GM12878 (cell line): ENCODE measurements at regions of chr2 and their contacts with region 1.

Region 1: GRCh38 chr2:196171248-196171871 is at the start of gene STK17B:
- DNase-seq: peak; percentile 82
- ATAC-seq: peak; percentile 64
- H3K4me3 ChIP-seq: peak within 1 kb of the TSS; percentile 98
- H3K27ac ChIP-seq: peak within 1 kb of the TSS; percentile 87
- H3K4me1 ChIP-seq: peaks cover 15% of the 10 kb centered on the region
- H3K27me3 ChIP-seq: no peaks in the 10 kb centered on the region
- CTCF ChIP-seq: no peak
- EP300 ChIP-seq: 0 out of 4 replicates have a peak, but pooled peaks of 1 of the 2 experiments have one; percentile 34
- POLR2A ChIP-seq: peak; percentile 99
- RAD21 ChIP-seq: peak; percentile 16; the same call in 1 of the 2 replicates
- polyA plus RNA-seq, gene STK17B: 21.2 to 28.2 TPM

Region 2: DNA sequence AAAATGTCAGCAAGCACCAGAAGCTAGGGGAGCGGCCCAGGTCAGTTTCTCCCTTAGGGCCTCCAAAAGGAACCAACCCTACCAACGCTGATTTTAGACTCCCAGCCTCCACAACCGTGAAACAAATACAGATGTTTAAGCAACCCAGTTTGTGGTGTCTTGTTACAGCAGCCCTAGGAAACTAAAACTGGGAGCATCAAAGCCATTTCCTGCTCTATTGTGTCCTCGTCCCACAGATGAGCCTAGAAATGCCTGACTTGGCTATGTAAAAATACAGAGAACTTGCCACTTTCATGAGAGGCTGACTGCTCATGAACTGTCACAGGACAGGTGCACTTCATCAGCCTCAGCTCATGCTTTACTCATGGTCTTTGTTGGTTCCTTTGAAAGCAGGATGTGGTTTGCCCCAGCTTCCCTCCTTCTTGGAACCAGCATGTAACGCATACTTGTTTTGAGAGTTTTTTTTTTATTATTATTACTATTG is 611.9 kb before region 1 on chr2:
- CTCF ChIA-PET with region 1: no interaction called
- POLR2A ChIA-PET with region 1: interaction called, 7 read pairs
- RAD21 ChIA-PET with region 1: no interaction called
- SMC1A ChIA-PET with region 1: no interaction called
- in situ Hi-C with region 1: no loop called
- intact Hi-C with region 1: loop called (anchors 5 kb)
- DNase-seq: peak; percentile 99
- ATAC-seq: peak; percentile 72
- H3K4me3 ChIP-seq: 0 out of 2 replicates have a peak overlapping the region, but pooled peaks have one; percentile 6
- H3K27ac ChIP-seq: peak overlapping the region; percentile 94
- H3K4me1 ChIP-seq: peaks cover 39% of the 10 kb centered on the region
- H3K27me3 ChIP-seq: no peaks in the 10 kb centered on the region
- CTCF ChIP-seq: no peak
- EP300 ChIP-seq: peak; percentile 88 to 97
- POLR2A ChIP-seq: no peak
- RAD21 ChIP-seq: 0 out of 2 replicates have a peak, but pooled peaks have one; percentile 15

Region 3: GRCh38 chr2:196160101-196160500 is 11.3 kb before region 1 on chr2:
- CTCF ChIA-PET with region 1: interaction called, 10 read pairs
- POLR2A ChIA-PET with region 1: interaction called, 64 read pairs
- RAD21 ChIA-PET with region 1: interaction called, 93 read pairs
- SMC1A ChIA-PET with region 1: interaction called, 74 read pairs
- in situ Hi-C with region 1: no loop called
- intact Hi-C with region 1: loop called (anchors 1 kb)
- DNase-seq: peak; percentile 86
- ATAC-seq: peak; percentile 64
- H3K4me3 ChIP-seq: no peak overlapping the region; the same call in 1 of the 2 replicates
- H3K27ac ChIP-seq: peak overlapping the region; percentile 77
- H3K4me1 ChIP-seq: peaks cover 29% of the 10 kb centered on the region
- H3K27me3 ChIP-seq: no peaks in the 10 kb centered on the region
- CTCF ChIP-seq: no peak
- EP300 ChIP-seq: peak; percentile 93
- POLR2A ChIP-seq: no peak
- RAD21 ChIP-seq: peak; percentile 17; the same call in 1 of the 2 replicates

Region 4: DNA sequence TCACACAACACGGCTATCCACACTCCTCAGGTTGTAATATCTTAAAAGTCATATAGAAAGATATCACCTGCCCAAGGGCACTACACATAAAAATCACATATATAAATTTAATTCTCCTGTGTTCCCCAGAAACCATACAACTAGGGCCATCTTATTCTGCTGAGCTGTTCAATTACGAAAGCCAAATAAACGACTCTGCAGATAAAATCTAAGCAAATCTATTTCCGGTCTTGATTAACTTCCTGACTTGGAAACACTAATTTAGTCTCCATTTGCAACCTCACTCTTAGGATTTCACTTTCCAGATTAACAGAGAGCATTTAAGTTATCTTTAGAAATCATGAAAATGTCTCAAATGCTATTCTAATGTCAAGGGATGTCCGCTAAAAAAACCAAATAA is 23.9 kb after region 1 on chr2:
- CTCF ChIA-PET with region 1: no interaction called
- POLR2A ChIA-PET with region 1: interaction called, 5 read pairs
- RAD21 ChIA-PET with region 1: interaction called, 44 read pairs
- SMC1A ChIA-PET with region 1: interaction called, 58 read pairs
- in situ Hi-C with region 1: no loop called
- intact Hi-C with region 1: loop called (anchors 1 kb)
- DNase-seq: no peak
- ATAC-seq: no peak
- H3K4me3 ChIP-seq: no peak overlapping the region
- H3K27ac ChIP-seq: no peak overlapping the region
- H3K4me1 ChIP-seq: no peaks in the 10 kb centered on the region
- H3K27me3 ChIP-seq: no peaks in the 10 kb centered on the region
- CTCF ChIP-seq: no peak
- EP300 ChIP-seq: no peak
- POLR2A ChIP-seq: no peak
- RAD21 ChIP-seq: no peak

Region 5: DNA sequence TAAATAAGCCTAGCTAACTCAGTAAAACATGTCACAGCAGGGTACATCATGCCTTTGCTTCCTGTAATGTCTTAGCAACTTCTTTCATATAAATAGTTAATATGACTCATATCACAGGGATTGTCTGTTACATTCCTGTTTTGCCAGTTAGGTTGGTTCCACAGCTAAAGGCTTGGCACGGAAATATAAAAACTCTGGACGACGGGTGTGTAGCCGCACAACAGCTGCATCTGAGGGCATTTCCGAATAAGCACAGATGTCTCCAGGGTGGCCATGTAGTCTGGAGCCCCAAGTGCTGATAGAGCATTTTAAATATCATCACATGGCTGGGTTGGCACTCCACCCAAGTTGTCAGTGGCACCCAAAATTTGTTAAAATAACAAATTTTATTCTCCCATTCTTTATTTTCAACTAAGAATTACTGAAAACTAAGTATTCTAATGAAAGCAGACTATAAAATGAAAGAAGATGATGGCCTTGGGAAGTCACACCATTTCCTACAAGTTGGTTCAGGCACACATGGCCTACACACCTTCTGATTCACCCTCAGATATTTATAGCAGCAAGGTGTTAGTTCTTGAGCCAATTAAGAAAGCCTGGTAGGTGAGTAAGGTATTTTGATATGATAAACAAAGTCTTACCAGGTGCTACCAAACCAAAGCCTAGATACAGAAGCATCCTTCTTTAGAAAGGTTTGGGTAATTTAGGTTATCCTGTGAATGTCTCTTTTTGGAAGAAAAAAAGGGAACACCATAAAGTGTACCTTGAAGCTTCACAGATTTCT is 61.9 kb after region 1 on chr2:
- CTCF ChIA-PET with region 1: interaction called, 10 read pairs
- POLR2A ChIA-PET with region 1: interaction called, 26 read pairs
- RAD21 ChIA-PET with region 1: interaction called, 89 read pairs
- SMC1A ChIA-PET with region 1: interaction called, 88 read pairs
- in situ Hi-C with region 1: no loop called
- intact Hi-C with region 1: no loop called
- DNase-seq: no peak
- ATAC-seq: peak; percentile 26
- H3K4me3 ChIP-seq: no peak overlapping the region
- H3K27ac ChIP-seq: peak overlapping the region; percentile 50; the same call in 1 of the 2 replicates
- H3K4me1 ChIP-seq: peaks cover 14% of the 10 kb centered on the region
- H3K27me3 ChIP-seq: no peaks in the 10 kb centered on the region
- CTCF ChIP-seq: no peak
- EP300 ChIP-seq: no peak
- POLR2A ChIP-seq: no peak
- RAD21 ChIP-seq: no peak

Region 6: GRCh38 chr2:196263181-196263747 is 91.9 kb after region 1 on chr2:
- CTCF ChIA-PET with region 1: interaction called, 6 read pairs
- POLR2A ChIA-PET with region 1: interaction called, 7 read pairs
- RAD21 ChIA-PET with region 1: interaction called, 68 read pairs
- SMC1A ChIA-PET with region 1: interaction called, 24 read pairs
- in situ Hi-C with region 1: loop called (anchors 25 kb)
- intact Hi-C with region 1: loop called (anchors 2 kb)
- DNase-seq: peak; percentile 88
- ATAC-seq: peak; percentile 94
- H3K4me3 ChIP-seq: 0 out of 2 replicates have a peak overlapping the region, but pooled peaks have one; percentile 7
- H3K27ac ChIP-seq: peak overlapping the region; percentile 75
- H3K4me1 ChIP-seq: peaks cover 9% of the 10 kb centered on the region
- H3K27me3 ChIP-seq: no peaks in the 10 kb centered on the region
- CTCF ChIP-seq: no peak
- EP300 ChIP-seq: peak; percentile 20 to 52; a peak in 2 of 4 replicates
- POLR2A ChIP-seq: 0 out of 2 replicates have a peak, but pooled peaks have one; percentile 31
- RAD21 ChIP-seq: no peak